Adrenal gland (tissue), 19 donors: ENCODE measurements at regions of chr4 and their contacts with region 1.

Region 1: DNA sequence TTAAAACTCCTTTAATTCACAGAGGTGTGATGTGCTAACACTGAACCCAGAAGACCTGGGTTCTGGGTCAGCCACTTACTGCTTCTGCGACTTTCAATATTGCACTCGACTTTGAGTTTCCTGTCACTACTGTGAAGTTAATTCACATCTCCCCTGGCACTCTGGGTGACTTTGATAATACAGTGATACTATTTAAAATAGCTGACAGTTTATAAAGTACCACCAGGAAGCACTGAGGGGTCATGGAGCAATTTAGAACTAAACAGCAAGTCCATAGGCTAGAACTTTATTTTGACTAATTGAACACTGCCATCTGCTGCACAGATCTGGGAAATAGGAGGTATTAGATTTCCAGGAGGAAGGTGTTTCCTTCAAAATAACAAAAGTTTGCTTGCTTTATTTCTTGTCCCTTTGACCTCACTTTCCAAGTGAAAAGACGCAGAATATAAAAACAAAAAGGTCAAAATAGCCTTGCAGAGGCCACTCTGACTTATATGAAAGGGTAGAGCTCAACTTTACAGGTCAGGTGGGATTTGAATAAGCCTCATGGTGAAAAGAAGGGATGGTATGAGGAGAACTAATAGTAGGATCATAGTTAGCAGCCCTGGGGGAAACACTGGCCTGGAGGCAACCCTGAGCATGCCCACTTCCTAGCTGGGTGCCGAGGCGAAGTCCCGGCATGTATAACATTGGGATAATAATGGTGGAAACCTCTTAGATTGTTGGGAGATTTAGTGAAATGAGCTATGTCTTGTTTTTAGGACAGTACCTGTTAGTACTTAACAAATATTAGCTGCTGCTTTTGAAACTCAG is 53.4 kb downstream of the ZNF518B start:
- DNase-seq: peak in 2 of 7 donors; percentile 16 to 25
- H3K4me3 ChIP-seq: no peak overlapping the region
- H3K27ac ChIP-seq: no peak overlapping the region
- H3K4me1 ChIP-seq: no peaks in the 10 kb centered on the region
- H3K27me3 ChIP-seq: no peaks in the 10 kb centered on the region
- CTCF ChIP-seq: peak; percentile 30 to 52 (median 48)
- POLR2A ChIP-seq: no peak

Region 2: GRCh38 chr4:9931146-9931545 is 472.7 kb before region 1 on chr4:
- intact Hi-C with region 1: no loop called
- DNase-seq: no peak
- H3K4me3 ChIP-seq: no peak overlapping the region
- H3K27ac ChIP-seq: no peak overlapping the region
- H3K4me1 ChIP-seq: no peaks in the 10 kb centered on the region
- H3K27me3 ChIP-seq: no peaks in the 10 kb centered on the region
- CTCF ChIP-seq: no peak
- POLR2A ChIP-seq: no peak

Region 3: DNA sequence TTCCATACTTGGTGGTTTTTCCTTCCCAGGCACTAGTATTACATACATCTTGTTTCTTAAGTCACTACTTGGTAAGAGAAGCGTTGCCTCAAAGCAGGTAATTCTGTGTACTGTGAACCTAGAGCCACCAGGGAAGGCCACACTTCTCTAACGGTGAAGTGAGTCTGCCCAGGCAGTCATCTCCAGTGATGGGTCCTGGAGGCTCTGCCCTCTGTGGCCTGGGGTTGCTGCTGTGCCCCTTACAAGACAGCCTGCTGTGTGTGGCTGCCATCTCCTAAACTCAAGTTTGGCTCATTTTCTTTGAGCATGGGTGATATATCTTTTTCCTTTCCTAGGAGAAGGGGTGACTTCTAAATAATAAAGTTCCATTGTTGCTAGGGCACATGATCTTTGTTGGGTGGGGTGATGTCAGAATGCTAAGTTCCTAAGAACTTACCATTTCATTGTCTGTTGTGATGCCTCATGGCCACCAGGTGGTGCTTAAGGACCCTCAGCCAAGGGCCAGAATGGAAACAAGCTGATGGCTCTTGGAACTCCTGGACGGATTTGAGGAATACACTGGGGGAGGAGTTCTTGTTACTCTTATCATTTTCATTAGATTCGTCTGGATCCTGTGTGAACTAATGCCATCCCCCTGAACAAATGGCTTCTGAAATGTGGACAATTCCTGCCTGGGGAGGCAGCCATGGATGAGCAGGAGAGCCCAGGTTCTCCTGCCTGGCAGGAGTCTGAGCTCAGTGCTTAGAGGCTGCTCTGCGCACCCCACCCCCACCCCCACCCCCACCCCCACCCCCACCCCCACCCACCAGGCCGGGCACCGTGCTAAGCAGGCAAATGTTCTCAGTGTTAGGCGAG is 246.1 kb before region 1 on chr4:
- intact Hi-C with region 1: loop called (anchors 5 to 10 kb)
- DNase-seq: peak; percentile 50 to 84 (median 68)
- H3K4me3 ChIP-seq: no peak overlapping the region
- H3K27ac ChIP-seq: no peak overlapping the region
- H3K4me1 ChIP-seq: no peaks in the 10 kb centered on the region
- H3K27me3 ChIP-seq: no peaks in the 10 kb centered on the region
- CTCF ChIP-seq: peak; percentile 53 to 81 (median 77)
- POLR2A ChIP-seq: no peak

Region 4: DNA sequence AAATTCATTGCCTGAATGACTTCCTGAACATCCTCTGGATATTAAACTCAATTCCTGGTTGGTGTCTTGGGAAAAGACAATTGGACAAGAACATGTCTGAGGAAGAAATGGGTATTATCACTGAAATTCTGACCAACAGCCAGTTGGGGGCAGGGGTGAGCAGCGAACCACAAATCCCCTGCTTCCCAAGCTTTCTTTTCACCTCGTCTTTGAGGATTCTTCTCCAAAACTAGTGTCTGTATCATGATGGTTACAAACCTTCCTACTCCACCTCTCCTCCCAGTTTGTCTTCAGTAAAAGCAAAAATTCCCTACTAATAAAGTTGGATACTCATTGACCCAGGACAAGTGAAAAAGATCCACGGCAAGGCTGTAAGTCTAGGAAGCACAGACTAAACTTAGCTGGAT is 239.0 kb before region 1 on chr4:
- intact Hi-C with region 1: loop called in 1 of 2 experiments (anchors 5 kb)
- DNase-seq: peak in 6 of 7 donors; percentile 38 to 69 (median 58)
- H3K4me3 ChIP-seq: no peak overlapping the region
- H3K27ac ChIP-seq: no peak overlapping the region
- H3K4me1 ChIP-seq: no peaks in the 10 kb centered on the region
- H3K27me3 ChIP-seq: no peaks in the 10 kb centered on the region
- CTCF ChIP-seq: peak; percentile 32 to 70 (median 66)
- POLR2A ChIP-seq: no peak